ENCODE measurements at regions of chr12 and their contacts with region 1.

Region 1: GRCh38 chr12:6540181-6540877 is 6.0 kb downstream of the GAPDH start:
- DNase-seq: peak; percentile 54
- ATAC-seq: peak; percentile 46
- H3K4me3 ChIP-seq: peak overlapping the region in 4 of 5 experiments; percentile 6 to 50 (median 34)
- H3K4me3 Mint-ChIP-seq: peak overlapping the region; percentile 86
- H3K27ac ChIP-seq: peak overlapping the region in 1 of 2 donors; percentile 48
- H3K27ac Mint-ChIP-seq: peak overlapping the region; percentile 74
- H3K4me1 ChIP-seq: peaks cover 23 to 32% of the 10 kb centered on the region in 2 donors
- H3K4me1 Mint-ChIP-seq: peaks cover 44% of the 10 kb centered on the region
- H3K27me3 ChIP-seq: no peaks in the 10 kb centered on the region
- H3K27me3 Mint-ChIP-seq: no peaks in the 10 kb centered on the region
- CTCF ChIP-seq: no peak

Region 2: DNA sequence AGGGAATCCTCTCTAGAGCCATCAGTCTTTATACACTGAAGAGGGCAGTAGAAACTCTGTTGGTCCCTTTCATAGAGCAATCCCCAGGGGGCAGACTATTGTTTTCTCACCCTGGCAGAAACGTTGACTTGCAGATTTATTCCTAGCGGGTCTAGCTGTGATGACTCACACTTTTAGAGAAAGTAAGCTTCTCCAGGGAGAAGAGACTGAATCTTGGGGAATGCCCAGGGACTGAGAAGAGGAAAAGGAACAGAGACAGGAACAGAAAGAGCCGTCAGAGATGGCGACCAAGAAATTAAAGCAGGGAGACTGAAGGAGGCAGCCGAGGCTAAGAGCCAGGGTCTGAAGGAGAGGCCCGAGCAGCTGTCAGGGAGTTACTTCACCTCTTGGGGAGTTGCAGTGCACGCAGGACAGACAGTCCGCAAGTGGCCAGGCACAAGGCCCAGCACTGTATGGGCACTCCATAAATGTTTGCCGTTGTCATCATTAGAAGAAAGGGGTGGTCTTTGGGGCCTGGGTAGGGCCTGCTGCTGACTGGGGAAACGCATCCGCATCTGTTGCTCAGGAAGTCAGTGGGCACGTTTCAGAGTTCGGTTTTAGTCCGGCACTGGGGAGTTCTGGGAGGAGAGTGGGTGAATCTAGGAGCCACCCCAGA is 216.9 kb before region 1 on chr12:
- CTCF ChIA-PET with region 1: interaction called, 5 read pairs
- POLR2A ChIA-PET with region 1: no interaction called
- intact Hi-C with region 1: loop called (anchors 1 kb)
- DNase-seq: peak; percentile 62
- ATAC-seq: peak; percentile 73
- H3K4me3 ChIP-seq: no peak overlapping the region
- H3K4me3 Mint-ChIP-seq: peak overlapping the region; percentile 52
- H3K27ac ChIP-seq: no peak overlapping the region
- H3K27ac Mint-ChIP-seq: peak overlapping the region; percentile 65
- H3K4me1 ChIP-seq: peaks cover 15 to 33% of the 10 kb centered on the region in 2 donors
- H3K4me1 Mint-ChIP-seq: peaks cover 15% of the 10 kb centered on the region
- H3K27me3 ChIP-seq: peaks cover 0 to 84% (median 61%) of the 10 kb centered on the region in 4 experiments
- H3K27me3 Mint-ChIP-seq: peaks cover 74% of the 10 kb centered on the region
- CTCF ChIP-seq: peak; percentile 27

Region 3: DNA sequence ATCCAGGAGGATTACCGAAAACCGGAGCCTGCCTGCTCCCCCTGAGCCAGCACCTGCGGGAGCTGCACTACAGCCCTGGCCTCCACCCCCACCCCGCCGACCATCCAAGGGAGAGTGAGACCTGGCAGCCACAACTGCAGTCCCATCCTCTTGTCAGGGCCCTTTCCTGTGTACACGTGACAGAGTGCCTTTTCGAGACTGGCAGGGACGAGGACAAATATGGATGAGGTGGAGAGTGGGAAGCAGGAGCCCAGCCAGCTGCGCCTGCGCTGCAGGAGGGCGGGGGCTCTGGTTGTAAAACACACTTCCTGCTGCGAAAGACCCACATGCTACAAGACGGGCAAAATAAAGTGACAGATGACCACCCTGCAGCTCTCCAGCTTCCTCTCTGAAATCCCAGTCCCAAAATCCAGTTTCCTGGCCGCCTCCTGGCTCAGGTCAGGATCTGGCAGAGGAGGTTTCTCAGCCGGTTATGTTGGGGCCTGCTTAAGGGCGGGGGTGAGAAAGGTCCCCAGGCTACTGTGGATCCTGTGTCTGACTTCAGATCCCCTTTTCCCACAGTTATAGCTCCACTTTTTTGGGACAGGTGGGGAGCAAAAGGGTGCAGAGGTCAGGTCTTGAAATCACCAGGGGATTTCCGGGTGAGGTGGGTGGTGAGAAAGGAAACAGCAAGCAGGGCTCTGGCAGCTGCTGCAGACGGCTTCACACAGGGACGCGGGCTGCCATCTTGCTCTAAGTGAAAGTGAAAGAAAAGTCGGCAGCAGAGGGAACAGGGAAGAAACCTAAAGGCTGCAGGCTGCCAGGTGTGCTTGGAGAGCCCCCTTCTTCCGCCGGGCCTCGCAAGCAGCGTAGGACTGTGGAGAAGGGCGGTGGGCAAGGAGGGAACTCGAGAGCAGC is 88.7 kb before region 1 on chr12 and contains the start of gene TAPBPL:
- CTCF ChIA-PET with region 1: interaction called, 11 read pairs
- POLR2A ChIA-PET with region 1: interaction called, 11 read pairs
- intact Hi-C with region 1: no loop called
- DNase-seq: peak; percentile 91
- ATAC-seq: peak; percentile 81
- H3K4me3 ChIP-seq: peak within 1 kb of the TSS; percentile 86 to 97 (median 94)
- H3K4me3 Mint-ChIP-seq: peak within 1 kb of the TSS; percentile 97
- H3K27ac ChIP-seq: peak within 1 kb of the TSS; percentile 96 to 98
- H3K27ac Mint-ChIP-seq: peak within 1 kb of the TSS; percentile 99
- H3K4me1 ChIP-seq: peaks cover 33 to 55% of the 10 kb centered on the region in 2 donors
- H3K4me1 Mint-ChIP-seq: peaks cover 64% of the 10 kb centered on the region
- H3K27me3 ChIP-seq: no peaks in the 10 kb centered on the region
- H3K27me3 Mint-ChIP-seq: no peaks in the 10 kb centered on the region
- CTCF ChIP-seq: no peak
- total RNA-seq, gene TAPBPL: 71.2 and 80.5 TPM in 2 replicates

Region 4: DNA sequence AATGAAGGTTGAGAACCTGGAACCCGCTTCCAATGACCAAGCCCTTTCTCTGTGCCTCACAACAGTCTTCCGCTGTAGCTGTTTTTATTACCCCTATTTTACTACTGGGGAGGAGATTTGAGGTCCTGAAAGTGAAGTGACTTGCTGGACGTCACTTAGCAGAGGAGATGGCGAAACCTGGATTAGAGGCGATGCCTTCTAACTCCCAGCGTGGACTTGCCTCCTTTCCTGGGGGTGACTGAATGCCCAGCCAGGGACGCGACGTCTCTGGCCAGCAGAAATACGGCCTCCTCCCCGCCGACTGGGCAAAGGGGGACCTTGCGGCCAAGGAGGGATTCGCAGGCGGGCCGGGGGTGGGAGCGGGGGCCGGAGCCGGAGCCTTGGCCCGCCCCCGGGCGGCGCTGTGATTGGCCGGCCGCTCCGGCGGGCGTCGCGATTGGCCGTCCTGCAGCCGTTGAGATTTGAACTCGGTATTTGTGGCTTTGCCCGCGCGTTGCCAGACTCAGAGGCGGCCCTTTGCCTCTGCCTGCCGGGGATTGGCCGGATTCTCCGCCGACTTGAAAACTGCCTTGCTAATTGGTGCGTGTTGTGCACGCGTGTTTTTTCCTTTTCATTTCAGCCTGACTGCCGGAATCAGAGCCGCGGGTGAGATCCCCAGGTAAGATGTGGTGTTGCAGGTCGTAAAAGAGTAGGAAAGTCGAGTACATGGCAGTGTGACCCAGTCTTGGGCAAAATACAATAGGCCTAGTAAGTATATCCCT is 46.7 kb before region 1 on chr12 and contains the start of gene NCAPD2:
- CTCF ChIA-PET with region 1: interaction called, 24 read pairs
- POLR2A ChIA-PET with region 1: interaction called, 10 read pairs
- intact Hi-C with region 1: no loop called
- DNase-seq: peak; percentile 97
- ATAC-seq: peak; percentile 86
- H3K4me3 ChIP-seq: peak within 1 kb of the TSS; percentile 68 to 100 (median 95)
- H3K4me3 Mint-ChIP-seq: peak within 1 kb of the TSS; percentile 98
- H3K27ac ChIP-seq: peak within 1 kb of the TSS; percentile 92 to 95
- H3K27ac Mint-ChIP-seq: peak within 1 kb of the TSS; percentile 95
- H3K4me1 ChIP-seq: peaks cover 22 to 27% of the 10 kb centered on the region in 2 donors
- H3K4me1 Mint-ChIP-seq: peaks cover 31% of the 10 kb centered on the region
- H3K27me3 ChIP-seq: no peaks in the 10 kb centered on the region
- H3K27me3 Mint-ChIP-seq: no peaks in the 10 kb centered on the region
- CTCF ChIP-seq: peak; percentile 22
- total RNA-seq, gene NCAPD2: 41.1 and 42.1 TPM in 2 replicates